ENCODE measurements at regions of chr4 and their contacts with region 1.

Region 1: DNA sequence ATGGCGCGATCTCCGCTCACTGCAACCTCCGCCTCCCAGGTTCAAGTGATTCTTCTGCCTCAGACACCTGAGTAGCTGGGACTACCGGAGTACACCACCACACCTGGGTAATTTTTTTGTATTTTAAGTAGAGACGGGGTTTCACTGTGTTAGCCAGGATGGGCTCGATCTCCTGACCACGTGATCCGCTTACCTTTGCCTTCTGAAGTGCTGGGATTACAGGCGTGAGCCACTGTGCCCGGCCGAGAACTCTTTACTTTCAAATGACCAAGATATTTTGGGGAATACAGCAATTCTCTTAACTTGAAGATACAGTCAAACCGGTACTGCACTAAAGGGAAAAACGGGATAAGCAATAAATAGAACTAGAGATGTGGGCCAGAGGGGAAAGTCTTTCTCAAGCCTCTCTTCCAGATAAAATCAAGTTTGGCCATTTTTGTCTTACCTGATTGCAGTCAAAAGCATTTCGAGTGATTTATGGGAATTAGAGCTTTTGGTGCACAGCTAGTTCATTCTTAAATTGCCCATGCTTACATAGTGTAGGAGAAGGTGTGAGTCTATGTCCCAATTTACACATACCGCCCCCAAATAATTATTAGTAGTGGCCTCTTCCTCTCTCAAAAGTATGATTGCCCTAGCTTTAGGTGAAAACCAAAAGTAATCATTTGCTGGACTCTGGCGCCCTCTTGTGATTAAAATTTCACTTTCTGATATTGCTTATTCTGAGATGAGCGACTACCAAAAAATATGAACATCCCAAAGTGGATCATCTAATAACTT is 53.2 kb upstream of the ABCG2 start:
- H3K4me3 ChIP-seq: no peak overlapping the region
- H3K27ac ChIP-seq: no peak overlapping the region
- H3K4me1 ChIP-seq: no peaks in the 10 kb centered on the region
- CTCF ChIP-seq: no peak

Region 2: GRCh38 chr4:87985097-87985886 is 226.4 kb before region 1 on chr4:
- CTCF ChIA-PET with region 1: interaction called, 11 read pairs
- POLR2A ChIA-PET with region 1: no interaction called
- H3K4me3 ChIP-seq: no peak overlapping the region
- H3K27ac ChIP-seq: no peak overlapping the region
- H3K4me1 ChIP-seq: no peaks in the 10 kb centered on the region
- CTCF ChIP-seq: peak; percentile 74

Region 3: GRCh38 chr4:88033309-88033708 is 178.4 kb before region 1 on chr4:
- CTCF ChIA-PET with region 1: interaction called, 45 read pairs
- POLR2A ChIA-PET with region 1: no interaction called
- H3K4me3 ChIP-seq: no peak overlapping the region
- H3K27ac ChIP-seq: no peak overlapping the region
- H3K4me1 ChIP-seq: no peaks in the 10 kb centered on the region
- CTCF ChIP-seq: peak; percentile 47; the same call in 1 of the 2 replicates

Region 4: DNA sequence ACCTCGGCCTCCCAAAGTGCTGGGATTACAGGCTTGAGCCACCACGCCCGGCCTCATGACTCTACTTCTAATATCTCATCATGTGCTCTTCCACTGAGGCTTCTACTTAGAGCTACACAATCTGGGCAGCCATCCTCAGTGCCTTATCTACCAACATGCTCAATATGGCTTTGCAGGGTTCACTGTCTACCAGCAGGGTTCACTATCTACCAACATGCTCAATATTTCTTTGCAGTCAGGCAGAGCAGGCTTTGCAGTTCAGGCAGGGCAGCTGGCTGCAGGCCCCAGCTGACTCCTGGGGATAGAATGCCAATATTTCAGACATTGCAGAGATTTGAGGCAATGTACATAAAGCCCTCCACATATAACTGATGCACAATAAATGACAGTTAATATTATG is 156.8 kb before region 1 on chr4:
- CTCF ChIA-PET with region 1: interaction called, 11 read pairs
- POLR2A ChIA-PET with region 1: no interaction called
- H3K4me3 ChIP-seq: no peak overlapping the region
- H3K27ac ChIP-seq: no peak overlapping the region
- H3K4me1 ChIP-seq: no peaks in the 10 kb centered on the region
- CTCF ChIP-seq: peak; percentile 41; the same call in 1 of the 2 replicates

Region 5: DNA sequence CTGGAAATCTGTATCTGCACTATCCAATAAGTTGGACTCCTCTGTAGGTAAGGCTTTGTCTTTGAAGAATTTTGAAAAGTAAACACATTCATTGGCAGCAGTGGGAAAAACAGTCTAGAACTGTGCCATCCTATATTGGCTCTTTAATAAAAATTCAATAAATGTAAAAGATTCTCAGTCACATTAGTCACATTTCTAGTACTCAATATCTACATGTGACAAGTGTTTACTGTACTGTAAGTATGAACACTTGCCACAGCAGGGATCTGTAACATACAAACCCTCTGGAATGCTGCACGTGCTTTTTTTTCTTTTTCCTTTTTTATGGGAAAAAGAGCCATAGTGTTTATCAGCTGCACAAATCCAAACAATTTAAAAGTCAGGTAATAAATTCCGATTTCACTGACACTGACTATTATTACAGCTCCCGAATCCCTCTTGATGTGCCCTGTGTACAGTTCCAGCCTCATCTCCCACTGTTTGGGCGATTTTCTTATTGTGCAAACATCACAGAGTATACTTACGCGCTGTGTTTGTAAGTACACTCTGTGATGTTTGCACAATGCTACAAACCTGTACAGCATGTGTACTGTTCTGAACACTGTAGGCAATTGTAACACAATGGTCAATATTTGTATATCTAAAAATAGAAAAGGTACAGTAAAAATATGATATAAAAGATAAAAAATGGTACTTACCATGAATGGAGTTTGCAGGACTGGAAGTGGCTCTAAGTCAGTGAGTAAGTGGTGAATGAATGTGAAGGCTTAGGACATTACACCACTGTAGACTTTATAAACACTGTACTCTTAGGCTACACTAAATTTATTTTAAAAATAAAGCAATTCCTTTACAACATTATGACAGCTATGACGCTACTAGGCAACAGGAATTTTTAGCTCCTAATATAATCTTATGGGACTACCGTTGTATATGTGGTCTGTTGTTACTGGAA is 303.2 kb after region 1 on chr4:
- CTCF ChIA-PET with region 1: interaction called, 74 read pairs
- POLR2A ChIA-PET with region 1: no interaction called
- H3K4me3 ChIP-seq: no peak overlapping the region
- H3K27ac ChIP-seq: no peak overlapping the region
- H3K4me1 ChIP-seq: no peaks in the 10 kb centered on the region
- CTCF ChIP-seq: no peak